GM12878 (cell line): ENCODE measurements at regions of chr10 and their contacts with region 1.

Region 1: DNA sequence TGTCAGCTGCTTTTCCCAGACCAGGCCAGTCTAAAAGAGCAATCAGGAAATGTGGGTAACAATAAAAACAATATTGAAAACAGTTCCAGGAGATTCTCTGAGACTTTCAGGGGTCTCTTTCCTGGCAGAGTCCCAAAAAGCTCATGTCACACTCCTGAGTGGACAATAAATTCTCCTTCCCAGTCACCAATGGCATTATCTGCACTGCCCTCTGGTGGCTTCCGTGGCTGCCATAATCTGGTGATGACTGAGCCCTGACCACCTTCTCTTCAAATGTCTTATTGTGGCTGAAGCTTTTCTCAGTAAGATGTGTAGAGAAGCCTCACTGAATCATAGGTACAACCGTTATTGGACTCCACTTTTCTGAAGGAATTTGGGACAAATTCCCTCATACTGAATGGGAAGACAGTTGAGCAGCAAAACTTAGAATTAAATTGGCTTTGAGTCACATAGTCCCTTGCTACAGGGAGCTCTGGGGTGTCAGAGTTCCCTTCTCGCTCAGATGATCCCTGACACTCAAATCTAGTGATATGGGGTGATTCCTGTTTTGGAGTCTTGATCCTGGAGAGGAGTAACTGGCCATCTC is 24.4 kb upstream of the ASAH2 start:
- DNase-seq: peak; percentile 25
- ATAC-seq: peak; percentile 95
- H3K4me3 ChIP-seq: no peak overlapping the region
- H3K27ac ChIP-seq: no peak overlapping the region
- H3K4me1 ChIP-seq: no peaks in the 10 kb centered on the region
- H3K27me3 ChIP-seq: peaks cover 0 to 5% of the 10 kb centered on the region in 2 experiments; a peak in 2 of 4 replicates
- CTCF ChIP-seq: peak; percentile 69 to 83 (median 75)
- EP300 ChIP-seq: no peak
- POLR2A ChIP-seq: no peak
- RAD21 ChIP-seq: peak; percentile 78

Region 2: DNA sequence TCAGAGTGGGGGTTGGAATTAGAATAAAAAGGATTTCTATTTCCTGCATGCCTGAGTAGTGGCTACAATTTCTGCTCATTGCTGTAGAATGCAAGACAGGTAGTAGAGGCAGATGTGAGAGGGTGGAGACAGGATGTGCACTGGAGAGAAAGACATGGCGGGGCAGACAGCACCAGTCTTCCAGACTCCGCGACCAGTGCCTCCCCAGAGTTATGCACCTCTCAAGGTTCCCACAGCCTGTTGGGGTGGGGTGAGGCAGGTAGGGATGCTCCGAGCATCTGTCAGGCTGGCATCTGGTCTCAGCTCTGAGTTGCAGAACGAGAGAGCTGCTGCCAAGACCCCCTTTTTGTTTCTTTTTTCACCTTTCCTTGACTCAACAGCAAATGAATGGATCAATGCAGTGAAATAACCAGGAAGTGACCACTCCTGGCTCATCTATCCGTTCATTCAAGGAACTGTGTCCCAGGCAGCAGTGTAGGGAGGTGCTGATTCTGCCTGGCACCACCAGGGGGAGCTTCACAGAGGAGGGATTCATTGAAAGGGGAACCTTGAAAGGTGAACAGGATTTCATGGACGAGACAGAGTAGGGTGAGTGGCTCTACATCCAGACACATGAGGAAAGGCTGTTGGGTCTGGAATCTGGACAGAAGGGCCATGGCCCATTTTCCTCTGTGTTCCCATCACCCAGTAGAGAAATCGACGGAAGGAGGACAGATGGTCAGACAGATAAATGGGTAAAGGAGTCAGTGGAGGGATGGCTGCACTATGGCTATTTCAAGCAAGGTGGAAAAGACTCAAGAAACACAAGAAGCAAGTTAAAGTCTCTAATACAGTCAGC is 682.8 kb before region 1 on chr10:
- CTCF ChIA-PET with region 1: interaction called, 24 read pairs
- POLR2A ChIA-PET with region 1: no interaction called
- RAD21 ChIA-PET with region 1: interaction called, 13 read pairs
- SMC1A ChIA-PET with region 1: interaction called, 9 read pairs
- in situ Hi-C with region 1: no loop called
- intact Hi-C with region 1: loop called (anchors 2 kb)
- DNase-seq: peak; percentile 5
- ATAC-seq: peak; percentile 93
- H3K4me3 ChIP-seq: no peak overlapping the region
- H3K27ac ChIP-seq: no peak overlapping the region
- H3K4me1 ChIP-seq: no peaks in the 10 kb centered on the region
- H3K27me3 ChIP-seq: no peaks in the 10 kb centered on the region
- CTCF ChIP-seq: peak; percentile 91 to 98 (median 97)
- EP300 ChIP-seq: no peak
- POLR2A ChIP-seq: no peak
- RAD21 ChIP-seq: peak; percentile 62

Region 3: GRCh38 chr10:50224330-50224952 is 51.3 kb before region 1 on chr10:
- CTCF ChIA-PET with region 1: interaction called, 59 read pairs
- POLR2A ChIA-PET with region 1: interaction called, 6 read pairs
- RAD21 ChIA-PET with region 1: interaction called, 17 read pairs
- SMC1A ChIA-PET with region 1: interaction called, 26 read pairs
- in situ Hi-C with region 1: no loop called
- intact Hi-C with region 1: no loop called
- DNase-seq: peak; percentile 36
- ATAC-seq: peak; percentile 99
- H3K4me3 ChIP-seq: no peak overlapping the region
- H3K27ac ChIP-seq: no peak overlapping the region
- H3K4me1 ChIP-seq: no peaks in the 10 kb centered on the region
- H3K27me3 ChIP-seq: no peaks in the 10 kb centered on the region
- CTCF ChIP-seq: peak; percentile 65 to 87 (median 67); a peak in 5 of 6 replicates
- EP300 ChIP-seq: no peak
- POLR2A ChIP-seq: no peak
- RAD21 ChIP-seq: peak; percentile 81

Region 4: DNA sequence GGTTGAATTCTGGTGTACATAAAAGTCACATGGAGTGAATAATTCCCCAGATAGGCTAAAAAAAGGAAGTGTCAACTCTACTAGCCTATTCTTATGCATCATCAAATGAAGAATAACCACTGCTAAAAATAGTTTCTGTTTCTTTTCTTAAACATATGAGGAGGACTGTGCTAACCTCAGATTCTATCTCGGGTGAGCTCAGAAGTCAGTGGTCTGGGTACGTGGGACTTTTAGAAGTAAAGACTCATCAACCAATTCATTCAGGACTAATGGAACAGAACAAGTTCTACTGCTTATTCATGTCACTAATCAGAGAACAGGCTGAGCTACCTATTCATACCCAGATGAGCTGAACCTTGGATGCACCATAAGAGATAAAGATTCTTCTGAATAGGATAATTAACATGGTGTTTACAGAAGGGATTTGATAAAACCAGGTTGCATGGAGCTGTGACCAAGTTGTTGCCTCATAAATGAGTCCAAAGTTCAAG is 14.9 kb before region 1 on chr10:
- CTCF ChIA-PET with region 1: interaction called, 43 read pairs
- POLR2A ChIA-PET with region 1: no interaction called
- RAD21 ChIA-PET with region 1: interaction called, 18 read pairs
- SMC1A ChIA-PET with region 1: interaction called, 17 read pairs
- in situ Hi-C with region 1: no loop called
- intact Hi-C with region 1: no loop called
- DNase-seq: peak; percentile 71
- ATAC-seq: peak; percentile 99
- H3K4me3 ChIP-seq: no peak overlapping the region
- H3K27ac ChIP-seq: no peak overlapping the region
- H3K4me1 ChIP-seq: peaks cover 13% of the 10 kb centered on the region
- H3K27me3 ChIP-seq: no peaks in the 10 kb centered on the region; a peak in 2 of 4 replicates
- CTCF ChIP-seq: no peak
- EP300 ChIP-seq: peak; percentile 31 to 59; a peak in 2 of 4 replicates
- POLR2A ChIP-seq: no peak
- RAD21 ChIP-seq: no peak

Region 5: DNA sequence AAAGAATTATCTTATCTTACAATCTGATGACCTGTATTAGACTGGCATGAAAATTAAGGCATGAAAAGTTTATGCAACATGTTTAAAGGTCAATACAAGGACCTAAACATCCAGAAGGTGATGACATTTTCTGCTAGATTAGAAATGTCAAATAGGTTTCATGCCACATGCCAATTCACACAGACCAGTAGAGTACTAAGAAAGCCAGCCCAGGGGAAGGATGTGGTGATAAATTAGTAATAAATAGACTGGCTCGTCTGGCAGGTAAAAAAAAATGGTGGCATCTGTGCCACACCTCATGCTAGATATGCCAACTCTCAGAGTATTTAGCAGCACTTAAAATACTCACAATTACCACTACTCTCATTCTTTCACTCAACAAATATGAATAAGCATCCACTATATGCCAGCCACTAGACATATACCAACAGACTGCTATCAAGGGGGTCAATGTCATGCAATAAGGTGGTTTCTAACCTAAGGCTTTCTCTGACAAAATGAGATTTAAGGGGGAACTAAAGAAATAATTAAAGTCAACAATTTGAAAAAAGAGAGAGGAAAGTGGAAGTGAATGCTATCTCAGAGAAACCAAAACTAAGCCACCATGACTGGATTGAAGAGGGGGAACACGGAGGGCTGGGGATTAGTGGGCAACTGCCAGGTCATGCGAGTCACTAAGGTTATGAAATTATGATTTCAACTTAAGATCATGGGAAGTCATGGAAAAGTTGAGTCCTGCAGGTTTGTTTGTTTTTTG is 264.5 kb after region 1 on chr10:
- CTCF ChIA-PET with region 1: no interaction called
- POLR2A ChIA-PET with region 1: interaction called, 10 read pairs
- RAD21 ChIA-PET with region 1: no interaction called
- SMC1A ChIA-PET with region 1: no interaction called
- in situ Hi-C with region 1: no loop called
- intact Hi-C with region 1: no loop called
- DNase-seq: no peak
- ATAC-seq: peak; percentile 72
- H3K4me3 ChIP-seq: peak overlapping the region; percentile 42; the same call in 1 of the 2 replicates
- H3K27ac ChIP-seq: peak overlapping the region; percentile 86
- H3K4me1 ChIP-seq: peaks cover 51% of the 10 kb centered on the region
- H3K27me3 ChIP-seq: no peaks in the 10 kb centered on the region
- CTCF ChIP-seq: no peak
- EP300 ChIP-seq: peak in 1 of 2 experiments; percentile 36; a peak in 2 of 4 replicates
- POLR2A ChIP-seq: no peak
- RAD21 ChIP-seq: no peak